Activated naive CD8-positive, alpha-beta T cell treated with anti-CD3 and anti-CD28 coated beads, Interleukin-2, amount 10 ng/mL, durations not matched to agents 7 days and 5 days (primary cell): ENCODE measurements at regions of chr18 and their contacts with region 1.

Region 1: GRCh38 chr18:9102508-9103375 is at the start of gene NDUFV2:
- DNase-seq: peak; percentile 99
- ATAC-seq: peak; percentile 91
- H3K4me3 Mint-ChIP-seq: peak within 1 kb of the TSS; percentile 99
- H3K27ac Mint-ChIP-seq: peak within 1 kb of the TSS; percentile 98
- H3K4me1 Mint-ChIP-seq: peaks cover 48% of the 10 kb centered on the region
- H3K27me3 Mint-ChIP-seq: no peaks in the 10 kb centered on the region
- total RNA-seq, gene NDUFV2: 166 to 168 TPM

Region 2: GRCh38 chr18:9117980-9118841 is 15.5 kb after region 1 on chr18:
- POLR2A ChIA-PET with region 1: interaction called, 42 read pairs
- DNase-seq: no peak
- ATAC-seq: peak; percentile 46
- H3K4me3 Mint-ChIP-seq: peak overlapping the region; percentile 71
- H3K27ac Mint-ChIP-seq: peak overlapping the region; percentile 91
- H3K4me1 Mint-ChIP-seq: peaks cover 50% of the 10 kb centered on the region
- H3K27me3 Mint-ChIP-seq: no peaks in the 10 kb centered on the region